ENCODE measurements at regions of chr21 and their contacts with region 1.

Region 1: DNA sequence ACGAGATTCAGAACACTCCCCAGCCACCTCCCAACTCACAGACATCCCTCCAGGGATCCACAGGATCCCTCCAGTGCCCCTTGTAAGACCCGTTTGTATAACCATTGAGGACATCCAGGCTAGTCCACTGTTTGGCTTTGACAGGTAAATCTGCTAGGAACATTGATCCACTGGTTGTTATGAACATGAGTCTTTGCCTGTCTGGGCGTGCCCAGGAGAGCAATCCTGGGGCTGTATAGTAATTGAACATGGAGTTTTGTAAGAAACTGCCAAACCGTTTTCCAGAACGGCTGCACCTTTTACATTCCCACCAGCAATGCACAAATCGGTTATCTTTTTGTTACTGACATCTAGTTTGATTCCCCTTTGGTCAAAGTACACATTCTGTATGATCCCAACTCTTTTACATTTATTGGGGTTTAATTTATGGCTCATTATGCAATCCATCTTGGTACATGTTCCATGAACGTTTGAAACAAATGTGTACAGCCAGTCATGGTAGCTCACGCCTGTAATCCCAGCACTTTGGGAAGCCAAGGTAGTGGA is 88.7 kb downstream of the WDR4 start:
- DNase-seq: no peak
- H3K4me3 ChIP-seq: no peak overlapping the region
- H3K27ac ChIP-seq: no peak overlapping the region
- H3K4me1 ChIP-seq: peaks cover 0 to 9% (median 3%) of the 10 kb centered on the region in 4 experiments; a peak in 3 of 7 replicates
- H3K27me3 ChIP-seq: peaks cover 0 to 4% (median 0%) of the 10 kb centered on the region in 4 experiments; a peak in 1 of 7 replicates
- CTCF ChIP-seq: no peak
- EP300 ChIP-seq: no peak
- POLR2A ChIP-seq: no peak
- RAD21 ChIP-seq: no peak

Region 2: GRCh38 chr21:42811960-42812359 is 21.4 kb after region 1 on chr21:
- CTCF ChIA-PET with region 1: interaction called, 25 read pairs
- POLR2A ChIA-PET with region 1: interaction called, 12 read pairs
- DNase-seq: peak in 1 of 2 experiments; percentile 26
- H3K4me3 ChIP-seq: no peak overlapping the region
- H3K27ac ChIP-seq: no peak overlapping the region
- H3K4me1 ChIP-seq: peaks cover 0 to 11% (median 4%) of the 10 kb centered on the region in 4 experiments; a peak in 3 of 7 replicates
- H3K27me3 ChIP-seq: no peaks in the 10 kb centered on the region
- CTCF ChIP-seq: no peak
- EP300 ChIP-seq: no peak
- POLR2A ChIP-seq: no peak
- RAD21 ChIP-seq: no peak

Region 3: DNA sequence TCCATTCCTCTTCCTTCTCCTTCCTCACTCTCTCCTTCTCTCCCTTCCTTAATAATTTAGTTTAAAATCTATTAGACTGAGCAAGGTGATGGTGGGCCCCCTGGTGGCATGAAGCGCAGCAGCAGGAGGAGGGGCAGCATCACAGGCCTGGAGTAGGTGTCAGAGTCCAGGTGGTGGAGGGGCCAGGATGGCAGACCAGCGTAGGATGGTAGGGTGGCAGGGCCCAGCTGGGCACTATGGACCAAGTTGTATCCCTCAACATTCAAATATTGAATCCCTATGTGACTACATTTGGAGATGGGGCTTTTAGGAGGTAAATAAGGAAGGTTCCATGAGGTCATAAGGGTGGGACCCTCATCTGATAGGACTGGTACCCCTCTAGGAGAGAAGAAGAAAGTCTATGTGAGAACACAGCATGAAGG is 27.7 kb after region 1 on chr21:
- CTCF ChIA-PET with region 1: interaction called, 25 read pairs
- POLR2A ChIA-PET with region 1: interaction called, 6 read pairs
- DNase-seq: peak in 1 of 2 experiments; percentile 80
- H3K4me3 ChIP-seq: no peak overlapping the region
- H3K27ac ChIP-seq: no peak overlapping the region
- H3K4me1 ChIP-seq: peaks cover 0 to 1% (median 0%) of the 10 kb centered on the region in 4 experiments; a peak in 1 of 7 replicates
- H3K27me3 ChIP-seq: no peaks in the 10 kb centered on the region
- CTCF ChIP-seq: peak; percentile 76 to 91 (median 77)
- EP300 ChIP-seq: no peak
- POLR2A ChIP-seq: no peak
- RAD21 ChIP-seq: peak; percentile 85 to 89

Measured in H1 (cell line).